Activated T-helper 1 cell treated with anti-CD3 and anti-CD28 coated beads, Interleukin-12 subunit alpha, Interleukin-12 subunit beta, Interleukin-2, Interleukin-4 antibody, amounts not matched to agents 30 ng/mL and 10 ng/mL and 1 ng/mL, durations not matched to agents 14 hours and 24 hours and 36 hours (primary cell): ENCODE measurements at regions of chr21 and their contacts with region 1.

Region 1: DNA sequence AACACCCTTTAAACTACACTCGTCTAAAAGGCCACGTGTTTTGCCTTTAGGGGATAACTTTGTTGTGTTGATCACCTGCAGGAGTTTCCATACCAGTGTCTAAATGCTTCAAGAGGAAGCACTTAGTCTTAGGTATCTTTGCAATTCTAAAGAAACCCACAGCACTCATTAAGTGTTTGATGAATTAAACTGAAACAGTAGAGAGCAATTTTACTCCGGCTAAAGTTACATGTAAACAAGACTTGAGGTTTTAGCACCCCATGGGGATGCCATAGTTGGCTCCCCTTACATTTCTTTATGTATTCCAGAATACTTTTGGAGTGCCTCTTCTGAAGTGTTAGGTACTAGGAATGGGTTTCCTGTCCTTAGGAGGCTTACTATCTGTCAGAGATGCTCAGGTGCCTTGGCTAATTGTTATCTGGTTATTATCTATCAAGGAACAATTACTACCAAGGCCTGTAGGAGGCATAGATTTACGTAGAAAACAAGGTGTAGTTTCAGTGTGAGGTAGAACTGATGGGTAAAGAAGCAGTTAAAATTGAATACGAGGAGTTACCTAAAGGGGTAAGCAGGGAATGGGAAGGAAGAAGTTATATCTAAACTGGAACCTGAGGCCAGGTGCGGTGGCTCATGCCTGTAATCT is 176.8 kb upstream of the SAMSN1 start:
- DNase-seq: no peak
- H3K4me3 Mint-ChIP-seq: peak overlapping the region; percentile 4
- H3K27ac Mint-ChIP-seq: peak overlapping the region; percentile 29
- H3K4me1 Mint-ChIP-seq: peaks cover 35% of the 10 kb centered on the region
- H3K27me3 Mint-ChIP-seq: no peaks in the 10 kb centered on the region

Region 2: GRCh38 chr21:14492931-14493330 is 230.0 kb before region 1 on chr21:
- intact Hi-C with region 1: loop called (anchors 5 kb)
- DNase-seq: no peak
- H3K4me3 Mint-ChIP-seq: no peak overlapping the region
- H3K27ac Mint-ChIP-seq: no peak overlapping the region
- H3K4me1 Mint-ChIP-seq: peaks cover 58% of the 10 kb centered on the region
- H3K27me3 Mint-ChIP-seq: no peaks in the 10 kb centered on the region

Region 3: DNA sequence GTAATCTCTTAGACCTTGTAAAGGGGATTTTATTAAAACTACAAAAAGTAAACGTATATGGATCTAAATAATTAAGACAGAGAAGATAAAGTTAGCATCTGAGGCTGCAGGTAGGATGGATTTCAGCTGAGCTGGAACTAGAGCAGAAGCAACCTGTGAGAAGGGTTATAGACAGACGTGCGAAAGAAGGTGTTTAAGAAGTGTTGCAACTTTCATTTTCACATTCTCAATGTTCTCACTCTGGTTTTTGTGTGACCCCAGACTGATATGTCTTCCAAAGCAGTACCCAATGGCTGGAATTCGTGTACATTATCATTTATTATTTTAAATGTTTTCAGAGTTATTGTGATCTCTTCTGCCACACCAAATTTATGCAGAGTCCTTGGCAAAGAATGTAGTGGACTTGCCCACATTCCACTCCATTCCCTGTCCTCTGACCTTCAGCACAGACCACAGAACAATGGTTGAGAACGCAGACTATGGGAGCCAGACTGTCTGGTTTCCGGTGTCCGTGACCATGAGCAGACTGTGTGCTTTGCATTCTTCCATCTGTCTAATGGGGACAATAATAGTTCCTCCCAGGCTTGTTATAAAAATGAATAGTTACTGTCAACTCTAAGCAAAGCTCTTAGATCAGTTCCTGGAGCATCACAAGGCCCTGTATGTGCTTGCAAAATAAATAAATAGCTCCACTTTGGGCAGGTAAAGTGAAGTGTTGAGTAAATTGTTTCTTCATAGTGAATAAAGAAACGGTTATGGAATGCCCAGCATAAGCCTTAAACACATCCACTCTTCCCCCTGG is 36.3 kb before region 1 on chr21:
- intact Hi-C with region 1: loop called (anchors 2 kb)
- DNase-seq: no peak
- H3K4me3 Mint-ChIP-seq: peak overlapping the region; percentile 34
- H3K27ac Mint-ChIP-seq: no peak overlapping the region
- H3K4me1 Mint-ChIP-seq: peaks cover 58% of the 10 kb centered on the region
- H3K27me3 Mint-ChIP-seq: no peaks in the 10 kb centered on the region